Ovary (tissue), 10 donors: ENCODE measurements at regions of chr3 and their contacts with region 1.

Region 1: GRCh38 chr3:100893590-100893989 is 99.6 kb downstream of the ABI3BP start:
- DNase-seq: peak in 1 of 5 donors; percentile 25
- H3K4me3 ChIP-seq: no peak overlapping the region
- H3K27ac ChIP-seq: no peak overlapping the region
- H3K4me1 ChIP-seq: no peaks in the 10 kb centered on the region
- H3K27me3 ChIP-seq: no peaks in the 10 kb centered on the region
- CTCF ChIP-seq: no peak
- EP300 ChIP-seq: no peak
- POLR2A ChIP-seq: no peak

Region 2: GRCh38 chr3:99330281-99330680 is 1563.3 kb before region 1 on chr3:
- intact Hi-C with region 1: no loop called
- DNase-seq: no peak
- H3K4me3 ChIP-seq: no peak overlapping the region
- H3K27ac ChIP-seq: no peak overlapping the region
- H3K4me1 ChIP-seq: no peaks in the 10 kb centered on the region
- H3K27me3 ChIP-seq: no peaks in the 10 kb centered on the region
- CTCF ChIP-seq: no peak
- EP300 ChIP-seq: no peak
- POLR2A ChIP-seq: no peak

Region 3: GRCh38 chr3:100857863-100858262 is 35.7 kb before region 1 on chr3:
- intact Hi-C with region 1: loop called in 1 of 4 experiments (anchors 2 kb)
- DNase-seq: no peak
- H3K4me3 ChIP-seq: no peak overlapping the region
- H3K27ac ChIP-seq: no peak overlapping the region
- H3K4me1 ChIP-seq: no peaks in the 10 kb centered on the region
- H3K27me3 ChIP-seq: no peaks in the 10 kb centered on the region
- CTCF ChIP-seq: no peak
- EP300 ChIP-seq: no peak
- POLR2A ChIP-seq: no peak

Region 4: GRCh38 chr3:101195951-101196713 is 302.5 kb after region 1 on chr3:
- intact Hi-C with region 1: loop called in 1 of 4 experiments (anchors 5 kb)
- DNase-seq: no peak
- H3K4me3 ChIP-seq: no peak overlapping the region
- H3K27ac ChIP-seq: no peak overlapping the region
- H3K4me1 ChIP-seq: peaks cover 3% of the 10 kb centered on the region
- H3K27me3 ChIP-seq: no peaks in the 10 kb centered on the region
- CTCF ChIP-seq: peak in 2 of 3 donors; percentile 48 to 72
- EP300 ChIP-seq: no peak
- POLR2A ChIP-seq: no peak